Esophagus muscularis mucosa (tissue), 4 donors: ENCODE measurements at regions of chr15 and their contacts with region 1.

Region 1: GRCh38 chr15:39171944-39172368 is 408.9 kb upstream of the THBS1 start:
- DNase-seq: no peak
- H3K4me3 ChIP-seq: no peak overlapping the region
- H3K27ac ChIP-seq: peak overlapping the region; percentile 61 to 78 (median 66)
- H3K4me1 ChIP-seq: peaks cover 14 to 35% (median 31%) of the 10 kb centered on the region in 4 donors
- H3K27me3 ChIP-seq: no peaks in the 10 kb centered on the region
- CTCF ChIP-seq: peak; percentile 42 to 55 (median 45)
- EP300 ChIP-seq: no peak
- POLR2A ChIP-seq: no peak

Region 2: GRCh38 chr15:39132954-39133600 is 38.9 kb before region 1 on chr15:
- intact Hi-C with region 1: loop called (anchors 5 kb)
- DNase-seq: no peak
- H3K4me3 ChIP-seq: no peak overlapping the region
- H3K27ac ChIP-seq: peak overlapping the region; percentile 68 to 82 (median 75)
- H3K4me1 ChIP-seq: peaks cover 11 to 46% (median 31%) of the 10 kb centered on the region in 4 donors
- H3K27me3 ChIP-seq: no peaks in the 10 kb centered on the region
- CTCF ChIP-seq: no peak
- EP300 ChIP-seq: no peak
- POLR2A ChIP-seq: no peak

Region 3: DNA sequence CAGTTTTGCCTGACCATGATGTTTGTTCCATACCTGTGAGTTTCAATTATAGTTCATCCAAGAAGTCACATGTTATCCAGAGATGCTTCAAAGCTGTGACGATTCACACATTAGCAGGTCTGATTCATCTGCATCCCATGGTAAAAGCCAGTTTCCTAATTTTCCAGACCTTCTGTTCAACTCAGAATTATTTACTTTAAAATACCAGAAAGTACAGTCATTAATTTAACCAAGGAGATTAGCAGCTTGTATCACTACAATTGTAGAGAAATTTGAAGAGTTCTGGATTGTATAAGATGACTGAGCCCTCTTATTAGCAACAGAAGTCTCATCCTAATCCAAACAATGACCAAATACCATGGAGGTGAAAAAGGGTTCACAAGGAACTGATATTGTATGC is 332.9 kb after region 1 on chr15:
- intact Hi-C with region 1: loop called (anchors 10 kb)
- DNase-seq: peak; percentile 42
- H3K4me3 ChIP-seq: no peak overlapping the region
- H3K27ac ChIP-seq: peak overlapping the region; percentile 23 to 70 (median 56)
- H3K4me1 ChIP-seq: peaks cover 0 to 34% (median 29%) of the 10 kb centered on the region in 4 donors
- H3K27me3 ChIP-seq: no peaks in the 10 kb centered on the region
- CTCF ChIP-seq: no peak
- EP300 ChIP-seq: no peak
- POLR2A ChIP-seq: no peak